ENCODE measurements at regions of chr4 and their contacts with region 1.

Region 1: DNA sequence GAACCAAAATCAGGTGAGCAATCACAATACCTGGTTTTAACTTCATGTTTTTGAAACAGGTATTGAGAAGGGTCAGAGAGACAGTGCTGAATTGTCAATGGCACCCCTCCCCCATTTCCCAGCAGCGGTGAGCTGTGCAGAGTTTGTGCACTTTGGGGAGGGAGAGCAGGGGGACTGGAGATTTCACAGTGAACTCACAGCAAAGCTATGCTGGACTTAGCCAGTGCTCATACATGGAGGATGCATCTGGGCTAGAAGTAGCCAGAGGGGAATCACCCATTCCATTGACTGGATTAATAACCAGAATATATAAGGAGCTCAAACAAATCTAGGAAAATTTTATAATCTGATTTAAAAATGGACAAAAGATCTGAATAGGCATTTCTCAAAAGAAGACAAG is 612.6 kb downstream of the STPG2 start:
- DNase-seq: no peak
- H3K4me3 ChIP-seq: no peak overlapping the region
- H3K27ac ChIP-seq: no peak overlapping the region
- H3K4me1 ChIP-seq: no peaks in the 10 kb centered on the region
- H3K27me3 ChIP-seq: no peaks in the 10 kb centered on the region
- CTCF ChIP-seq: no peak
- EP300 ChIP-seq: no peak
- POLR2A ChIP-seq: no peak

Region 2: DNA sequence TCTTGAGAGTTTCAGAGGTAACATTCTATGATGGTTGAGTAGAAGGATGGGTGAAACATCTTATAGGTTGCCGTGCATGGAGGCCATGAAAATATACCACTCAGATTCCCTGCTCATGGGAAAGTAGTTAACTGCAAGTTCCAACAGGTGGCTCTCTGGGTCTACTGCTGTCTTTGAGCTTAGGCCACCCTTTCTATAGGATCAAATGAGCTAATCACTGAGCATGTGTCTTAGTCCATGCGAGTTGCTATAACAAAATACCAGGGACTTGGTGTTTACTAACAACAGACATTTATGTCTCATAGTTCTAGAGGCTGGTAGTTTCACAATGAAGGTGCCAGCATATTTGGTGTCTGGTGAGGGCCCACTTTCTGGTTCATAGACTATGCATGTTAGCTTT is 1837.1 kb before region 1 on chr4:
- in situ Hi-C with region 1: no loop called
- intact Hi-C with region 1: loop called (anchors 5 kb)
- DNase-seq: no peak
- H3K4me3 ChIP-seq: no peak overlapping the region
- H3K27ac ChIP-seq: no peak overlapping the region
- H3K4me1 ChIP-seq: no peaks in the 10 kb centered on the region
- H3K27me3 ChIP-seq: no peaks in the 10 kb centered on the region
- CTCF ChIP-seq: no peak
- EP300 ChIP-seq: no peak
- POLR2A ChIP-seq: no peak

Region 3: GRCh38 chr4:97513917-97514316 is 16.8 kb before region 1 on chr4:
- in situ Hi-C with region 1: no loop called
- intact Hi-C with region 1: no loop called
- DNase-seq: no peak
- H3K4me3 ChIP-seq: no peak overlapping the region
- H3K27ac ChIP-seq: no peak overlapping the region
- H3K4me1 ChIP-seq: no peaks in the 10 kb centered on the region
- H3K27me3 ChIP-seq: no peaks in the 10 kb centered on the region
- CTCF ChIP-seq: no peak
- EP300 ChIP-seq: no peak
- POLR2A ChIP-seq: no peak

Region 4: DNA sequence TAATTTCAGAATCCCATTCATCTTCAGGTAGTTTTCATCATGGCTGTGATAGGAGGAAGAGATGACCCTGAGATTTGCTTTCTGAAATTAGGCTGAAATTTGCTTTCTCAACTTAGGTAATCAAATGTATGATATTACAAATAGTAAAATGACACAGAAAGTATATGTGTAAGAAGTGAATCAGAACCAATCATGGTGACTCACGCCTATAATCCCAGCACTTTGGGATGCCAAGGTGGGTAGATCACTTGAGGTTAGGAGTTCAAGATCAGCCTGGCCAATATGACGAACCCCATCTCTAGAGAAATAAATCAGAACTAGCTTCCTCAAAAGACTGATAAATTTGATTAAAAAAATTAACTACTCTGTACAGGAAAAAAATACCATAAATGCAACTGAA is 57.2 kb after region 1 on chr4:
- in situ Hi-C with region 1: no loop called
- intact Hi-C with region 1: no loop called
- DNase-seq: no peak
- H3K4me3 ChIP-seq: no peak overlapping the region
- H3K27ac ChIP-seq: no peak overlapping the region
- H3K4me1 ChIP-seq: no peaks in the 10 kb centered on the region
- H3K27me3 ChIP-seq: no peaks in the 10 kb centered on the region
- CTCF ChIP-seq: no peak
- EP300 ChIP-seq: no peak
- POLR2A ChIP-seq: no peak

Region 5: DNA sequence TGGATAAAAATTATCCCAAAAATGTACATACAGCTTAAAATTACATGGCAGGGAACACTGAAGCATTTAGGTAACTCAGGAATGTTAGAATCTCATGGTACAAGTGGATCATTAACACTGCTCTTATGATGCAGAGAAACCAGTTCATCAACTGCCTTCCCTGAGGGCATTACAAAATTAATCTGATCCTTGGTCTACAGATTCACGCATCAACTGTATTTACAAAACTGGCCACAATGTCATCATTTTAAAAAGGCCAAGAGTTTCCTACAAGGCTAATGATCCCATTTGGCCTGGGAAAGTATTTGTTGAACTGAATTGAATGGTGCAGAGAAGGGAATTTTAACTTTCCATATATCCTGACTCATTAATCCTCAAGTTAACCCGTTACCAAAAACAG is 1043.1 kb after region 1 on chr4:
- in situ Hi-C with region 1: no loop called
- intact Hi-C with region 1: no loop called
- DNase-seq: no peak
- H3K4me3 ChIP-seq: no peak overlapping the region
- H3K27ac ChIP-seq: peak overlapping the region in 2 of 4 donors; percentile 49 to 52
- H3K4me1 ChIP-seq: peaks cover 0 to 2% (median 0%) of the 10 kb centered on the region in 4 donors
- H3K27me3 ChIP-seq: no peaks in the 10 kb centered on the region
- CTCF ChIP-seq: no peak
- EP300 ChIP-seq: no peak
- POLR2A ChIP-seq: no peak

Measured in transverse colon (tissue), 4 donors.